Endothelial cell of umbilical vein (primary cell): ENCODE measurements at regions of chr20 and their contacts with region 1.

Region 1: GRCh38 chr20:7313047-7313446 is 545.6 kb downstream of the BMP2 start:
- DNase-seq: no peak
- H3K4me3 ChIP-seq: no peak overlapping the region
- H3K27ac ChIP-seq: no peak overlapping the region
- H3K4me1 ChIP-seq: no peaks in the 10 kb centered on the region
- H3K27me3 ChIP-seq: no peaks in the 10 kb centered on the region
- CTCF ChIP-seq: no peak
- POLR2A ChIP-seq: no peak

Region 2: GRCh38 chr20:7302250-7302649 is 10.8 kb before region 1 on chr20:
- CTCF ChIA-PET with region 1: no interaction called
- POLR2A ChIA-PET with region 1: no interaction called
- dilution Hi-C with region 1: no loop called
- intact Hi-C with region 1: loop called (anchors 1 kb)
- DNase-seq: no peak
- H3K4me3 ChIP-seq: no peak overlapping the region
- H3K27ac ChIP-seq: no peak overlapping the region
- H3K4me1 ChIP-seq: no peaks in the 10 kb centered on the region
- H3K27me3 ChIP-seq: no peaks in the 10 kb centered on the region
- CTCF ChIP-seq: no peak
- POLR2A ChIP-seq: no peak

Region 3: GRCh38 chr20:7399575-7399974 is 86.5 kb after region 1 on chr20:
- CTCF ChIA-PET with region 1: no interaction called
- POLR2A ChIA-PET with region 1: no interaction called
- dilution Hi-C with region 1: no loop called
- intact Hi-C with region 1: no loop called
- DNase-seq: peak; percentile 79
- H3K4me3 ChIP-seq: no peak overlapping the region
- H3K27ac ChIP-seq: peak overlapping the region; percentile 59
- H3K4me1 ChIP-seq: peaks cover 15% of the 10 kb centered on the region
- H3K27me3 ChIP-seq: peaks cover 0 to 2% of the 10 kb centered on the region in 2 experiments
- CTCF ChIP-seq: no peak
- POLR2A ChIP-seq: no peak